Activated CD8-positive, alpha-beta T cell treated with anti-CD3 and anti-CD28 coated beads, Interleukin-2, amount 10 ng/mL, durations not matched to agents 7 days and 5 days (primary cell): ENCODE measurements at regions of chr15 and their contacts with region 1.

Region 1: DNA sequence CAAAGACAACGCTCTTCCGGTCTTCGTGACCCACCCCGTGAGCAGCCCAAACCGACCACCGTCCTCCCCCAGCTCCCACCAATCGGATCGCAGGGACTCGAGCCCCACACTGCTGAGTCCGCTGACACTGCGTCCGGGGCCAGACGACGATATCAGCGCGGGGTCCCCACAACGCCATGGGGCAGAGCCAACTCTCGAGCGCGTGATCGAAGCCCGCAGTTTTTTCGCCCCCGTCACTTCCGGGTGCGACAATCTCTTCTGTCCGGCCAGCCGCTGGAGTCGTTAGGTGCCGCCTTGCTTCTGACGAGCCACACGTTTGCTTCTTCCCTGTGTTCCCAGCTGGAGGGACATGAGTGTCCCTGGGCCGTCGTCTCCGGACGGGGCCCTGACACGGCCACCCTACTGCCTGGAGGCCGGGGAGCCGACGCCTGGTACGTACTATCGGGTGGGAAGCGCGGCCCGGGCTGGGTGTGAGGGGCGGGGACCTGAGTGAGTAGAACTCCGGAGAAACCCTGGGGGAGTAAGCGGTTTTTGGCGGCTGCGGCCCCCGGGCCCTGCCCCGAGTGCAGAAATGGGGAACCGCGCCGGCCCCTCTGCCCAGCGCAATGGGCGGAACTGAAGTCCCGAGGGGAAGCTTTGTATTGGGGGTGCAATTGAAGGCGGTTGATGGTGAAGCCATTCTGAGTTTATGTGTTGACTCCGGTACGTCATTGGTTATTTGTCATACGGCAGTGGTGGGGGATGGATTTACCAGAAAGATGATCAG is at the start of gene BLOC1S6:
- DNase-seq: peak; percentile 92
- ATAC-seq: peak; percentile 91
- H3K4me3 Mint-ChIP-seq: peak within 1 kb of the TSS; percentile 99
- H3K27ac Mint-ChIP-seq: peak within 1 kb of the TSS; percentile 100
- H3K4me1 Mint-ChIP-seq: peaks cover 43% of the 10 kb centered on the region
- H3K27me3 Mint-ChIP-seq: no peaks in the 10 kb centered on the region
- total RNA-seq, gene BLOC1S6: 32.9 to 35.2 TPM

Region 2: GRCh38 chr15:45307230-45307924 is 279.9 kb before region 1 on chr15:
- CTCF ChIA-PET with region 1: no interaction called
- POLR2A ChIA-PET with region 1: no interaction called
- DNase-seq: no peak
- ATAC-seq: peak; percentile 36
- H3K4me3 Mint-ChIP-seq: peak overlapping the region; percentile 58
- H3K27ac Mint-ChIP-seq: no peak overlapping the region
- H3K4me1 Mint-ChIP-seq: peaks cover 11% of the 10 kb centered on the region
- H3K27me3 Mint-ChIP-seq: peaks cover 28% of the 10 kb centered on the region

Region 3: GRCh38 chr15:45402162-45402954 is 184.9 kb before region 1 on chr15:
- CTCF ChIA-PET with region 1: interaction called, 4 read pairs
- POLR2A ChIA-PET with region 1: interaction called, 35 read pairs
- DNase-seq: peak; percentile 98
- ATAC-seq: peak; percentile 96
- H3K4me3 Mint-ChIP-seq: peak overlapping the region; percentile 97
- H3K27ac Mint-ChIP-seq: peak overlapping the region; percentile 86
- H3K4me1 Mint-ChIP-seq: peaks cover 29% of the 10 kb centered on the region
- H3K27me3 Mint-ChIP-seq: no peaks in the 10 kb centered on the region

Region 4: GRCh38 chr15:45429974-45430792 is 157.1 kb before region 1 on chr15:
- CTCF ChIA-PET with region 1: interaction called, 12 read pairs
- POLR2A ChIA-PET with region 1: no interaction called
- DNase-seq: peak; percentile 89
- ATAC-seq: peak; percentile 94
- H3K4me3 Mint-ChIP-seq: peak overlapping the region; percentile 57
- H3K27ac Mint-ChIP-seq: no peak overlapping the region
- H3K4me1 Mint-ChIP-seq: peaks cover 10% of the 10 kb centered on the region
- H3K27me3 Mint-ChIP-seq: peaks cover 28% of the 10 kb centered on the region

Region 5: DNA sequence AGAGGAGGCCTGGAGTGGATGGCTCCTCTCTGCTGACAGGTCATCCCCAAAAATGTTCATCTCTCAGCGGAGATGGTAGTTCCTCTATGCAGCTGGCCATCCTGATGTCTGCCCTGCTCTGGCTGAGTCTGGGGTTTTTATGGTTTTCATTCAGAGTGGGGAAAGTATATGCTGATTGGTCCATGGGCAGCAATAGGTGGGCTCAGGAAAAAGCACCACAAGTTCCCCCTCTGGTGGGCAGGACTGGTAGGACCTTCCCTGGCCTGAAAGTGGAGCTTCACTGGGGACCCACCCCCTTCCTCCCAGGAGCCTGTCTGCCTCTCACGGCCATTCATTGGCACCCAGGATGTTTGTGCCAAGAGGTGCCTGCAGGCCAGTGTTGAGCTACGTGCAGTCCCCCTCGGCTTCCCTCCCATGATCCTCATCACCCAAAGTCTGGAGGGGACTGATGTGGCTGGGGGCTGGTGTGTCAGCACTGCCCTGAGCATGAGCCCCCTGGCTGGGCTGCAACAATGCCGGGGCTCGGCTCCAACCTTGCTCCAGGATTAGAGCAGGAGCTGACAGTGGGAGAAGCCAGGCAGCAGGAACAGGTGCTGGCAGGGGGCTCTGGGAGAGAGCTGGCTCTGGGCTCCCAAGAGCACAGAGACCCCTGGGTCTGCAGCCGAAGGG is 13.2 kb before region 1 on chr15:
- CTCF ChIA-PET with region 1: interaction called, 13 read pairs
- POLR2A ChIA-PET with region 1: interaction called, 9 read pairs
- DNase-seq: peak; percentile 25
- ATAC-seq: peak; percentile 49
- H3K4me3 Mint-ChIP-seq: no peak overlapping the region
- H3K27ac Mint-ChIP-seq: no peak overlapping the region
- H3K4me1 Mint-ChIP-seq: no peaks in the 10 kb centered on the region
- H3K27me3 Mint-ChIP-seq: peaks cover 31% of the 10 kb centered on the region

Region 6: GRCh38 chr15:45611305-45611704 is 24.0 kb after region 1 on chr15:
- CTCF ChIA-PET with region 1: interaction called, 84 read pairs
- POLR2A ChIA-PET with region 1: interaction called, 4 read pairs
- DNase-seq: peak; percentile 21
- ATAC-seq: no peak
- H3K4me3 Mint-ChIP-seq: no peak overlapping the region
- H3K27ac Mint-ChIP-seq: no peak overlapping the region
- H3K4me1 Mint-ChIP-seq: peaks cover 5% of the 10 kb centered on the region
- H3K27me3 Mint-ChIP-seq: no peaks in the 10 kb centered on the region

Region 7: DNA sequence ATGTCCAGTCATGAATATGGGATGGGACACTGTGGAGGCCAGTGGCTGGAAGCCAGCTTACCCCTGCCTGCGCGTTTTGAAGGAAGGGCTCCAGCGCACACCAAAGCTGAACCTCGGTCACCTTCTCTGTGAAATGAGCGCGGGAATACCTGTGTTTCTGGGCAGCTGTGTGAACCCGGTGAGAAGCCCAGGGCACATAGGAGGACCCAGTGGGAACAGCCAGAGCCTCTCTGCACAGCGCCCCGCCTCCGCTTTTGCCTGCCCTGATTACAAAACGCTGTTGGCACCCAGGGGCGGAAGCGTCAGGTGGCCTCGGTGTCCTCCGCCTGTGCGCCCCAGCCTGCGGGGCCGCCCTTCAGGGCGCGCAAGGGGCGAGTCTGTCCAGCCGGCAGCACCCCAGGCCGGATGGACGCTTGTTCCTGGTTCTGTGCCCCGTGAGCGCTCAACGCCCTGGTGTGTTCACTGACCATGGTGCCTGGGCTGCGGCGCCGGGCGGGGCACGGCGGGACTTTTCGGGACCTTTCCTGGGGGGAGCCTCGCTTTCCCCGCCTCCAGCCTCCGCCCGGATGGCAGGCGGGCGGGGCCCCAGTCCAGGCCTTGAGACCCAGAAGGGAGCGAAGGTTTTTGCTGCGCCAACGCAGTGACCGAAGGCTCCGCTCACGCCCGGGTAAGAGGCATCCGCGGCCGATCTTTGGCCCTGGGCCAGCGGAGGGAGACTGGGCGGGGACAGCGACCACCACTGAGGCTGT is 47.3 kb after region 1 on chr15 and contains the start of gene SQOR:
- CTCF ChIA-PET with region 1: interaction called, 10 read pairs
- POLR2A ChIA-PET with region 1: interaction called, 26 read pairs
- DNase-seq: peak; percentile 78
- ATAC-seq: peak; percentile 78
- H3K4me3 Mint-ChIP-seq: peak within 1 kb of the TSS; percentile 100
- H3K27ac Mint-ChIP-seq: peak within 1 kb of the TSS; percentile 95
- H3K4me1 Mint-ChIP-seq: peaks cover 39% of the 10 kb centered on the region
- H3K27me3 Mint-ChIP-seq: no peaks in the 10 kb centered on the region
- total RNA-seq, gene SQOR: 75.8 to 79.6 TPM

Region 8: GRCh38 chr15:45641374-45641781 is 54.1 kb after region 1 on chr15:
- CTCF ChIA-PET with region 1: interaction called, 5 read pairs
- POLR2A ChIA-PET with region 1: interaction called, 15 read pairs
- DNase-seq: no peak
- ATAC-seq: no peak
- H3K4me3 Mint-ChIP-seq: no peak overlapping the region
- H3K27ac Mint-ChIP-seq: no peak overlapping the region
- H3K4me1 Mint-ChIP-seq: peaks cover 73% of the 10 kb centered on the region
- H3K27me3 Mint-ChIP-seq: no peaks in the 10 kb centered on the region